Heart right ventricle (tissue), 16 donors: ENCODE measurements at regions of chr22 and their contacts with region 1.

Region 1: DNA sequence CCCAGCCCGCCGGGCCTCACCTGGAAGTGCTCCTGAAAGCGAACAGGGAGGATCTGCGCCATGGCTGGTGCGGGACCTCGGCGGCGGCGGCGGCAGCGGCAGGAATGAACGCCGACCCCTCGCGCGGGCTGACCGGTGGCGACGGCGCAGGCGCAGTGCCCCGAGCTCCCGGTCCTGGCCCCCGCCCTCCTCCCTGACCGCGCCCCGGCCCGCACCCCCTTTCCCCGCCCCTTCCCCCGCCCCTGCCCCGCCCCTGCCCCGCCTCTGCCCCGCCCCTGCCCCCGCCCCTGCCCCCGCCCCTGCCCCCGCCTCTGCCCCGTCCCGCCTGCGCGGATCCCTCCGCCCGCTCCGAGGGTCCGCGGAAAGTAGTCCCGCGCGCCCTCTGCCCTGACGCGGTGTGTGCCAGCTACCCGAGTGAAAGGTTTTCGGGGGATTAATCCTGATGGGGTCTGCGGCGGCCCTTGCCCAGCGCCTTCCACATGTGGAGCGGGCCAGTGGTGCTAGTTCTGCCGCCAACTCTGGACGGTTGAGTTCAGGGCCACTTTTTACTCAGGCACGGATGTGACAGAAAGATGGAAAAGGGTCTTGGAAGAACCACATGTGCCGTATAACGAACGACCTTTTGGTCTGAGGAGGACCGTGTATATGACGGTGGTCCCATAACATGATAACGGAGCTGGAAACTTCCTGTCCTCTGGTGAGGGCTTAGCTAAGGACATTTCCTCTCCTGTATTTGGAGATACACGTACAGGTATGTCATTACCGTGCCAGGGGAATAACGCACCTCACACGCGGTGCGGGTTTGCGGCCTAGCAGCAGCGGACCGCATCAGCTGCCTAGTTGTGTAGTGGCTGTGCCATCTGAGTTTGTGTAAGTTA is at the start of gene CLTCL1:
- DNase-seq: peak; percentile 84 to 89
- ATAC-seq: peak; percentile 81 to 95 (median 90)
- H3K4me3 ChIP-seq: peak within 1 kb of the TSS; percentile 72 to 99 (median 92)
- H3K27ac ChIP-seq: peak within 1 kb of the TSS; percentile 69 to 90 (median 81)
- H3K4me1 ChIP-seq: peaks cover 4 to 43% (median 24%) of the 10 kb centered on the region in 9 donors
- H3K27me3 ChIP-seq: no peaks in the 10 kb centered on the region
- CTCF ChIP-seq: no peak
- total RNA-seq, gene CLTCL1: 7.1 to 21.9 (median 13.6) TPM

Region 2: DNA sequence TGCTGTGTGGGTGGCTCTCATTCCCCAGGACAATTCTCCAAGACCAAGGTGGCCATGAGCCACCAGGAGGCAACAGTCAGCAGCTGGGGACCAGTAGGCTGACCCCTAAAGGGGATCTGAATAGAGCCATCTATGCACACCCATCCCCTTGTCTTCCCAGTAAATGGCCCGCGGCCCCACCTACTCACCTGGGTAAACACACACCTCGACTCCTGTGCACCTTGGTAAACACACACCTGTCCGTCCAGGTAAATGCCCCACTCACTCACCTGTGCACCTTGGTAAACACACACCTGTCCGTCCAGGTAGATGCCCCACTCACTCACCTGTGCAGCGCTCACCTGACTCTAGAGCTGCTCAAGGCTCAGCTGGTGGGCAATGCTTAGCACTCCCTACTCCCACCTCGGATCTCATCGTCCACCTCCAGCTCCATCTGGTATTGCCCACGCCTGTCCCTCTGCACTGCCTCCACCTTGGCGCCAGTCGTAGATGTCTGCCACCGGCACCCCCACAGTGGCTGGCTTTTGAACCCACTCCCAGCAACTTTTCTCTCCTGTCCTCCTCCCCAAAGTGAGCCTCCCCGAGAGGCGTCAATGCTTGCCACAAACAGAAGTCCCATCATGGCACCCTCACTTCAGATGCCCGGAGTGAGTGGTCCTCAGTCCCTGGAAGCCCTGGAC is 123.5 kb before region 1 on chr22:
- intact Hi-C with region 1: no loop called
- DNase-seq: no peak
- ATAC-seq: no peak
- H3K4me3 ChIP-seq: no peak overlapping the region
- H3K27ac ChIP-seq: no peak overlapping the region
- H3K4me1 ChIP-seq: peaks cover 15 to 40% (median 35%) of the 10 kb centered on the region in 9 donors
- H3K27me3 ChIP-seq: peaks cover 29 to 59% (median 47%) of the 10 kb centered on the region in 7 donors
- CTCF ChIP-seq: no peak

Region 3: GRCh38 chr22:19178656-19179496 is 112.9 kb before region 1 on chr22 and contains the start of gene SLC25A1:
- intact Hi-C with region 1: loop called in 2 of 10 experiments (anchors 5 kb)
- DNase-seq: peak; percentile 90 to 95
- ATAC-seq: peak; percentile 87 to 94 (median 90)
- H3K4me3 ChIP-seq: peak within 1 kb of the TSS; percentile 66 to 96 (median 89)
- H3K27ac ChIP-seq: peak within 1 kb of the TSS; percentile 77 to 93 (median 88)
- H3K4me1 ChIP-seq: peaks cover 16 to 51% (median 37%) of the 10 kb centered on the region in 9 donors
- H3K27me3 ChIP-seq: no peaks in the 10 kb centered on the region
- CTCF ChIP-seq: no peak
- total RNA-seq, gene SLC25A1: 14.8 to 29.1 (median 19.9) TPM

Region 4: GRCh38 chr22:19214078-19214473 is 77.7 kb before region 1 on chr22:
- intact Hi-C with region 1: loop called in 1 of 10 experiments (anchors 5 kb)
- DNase-seq: no peak
- ATAC-seq: no peak
- H3K4me3 ChIP-seq: no peak overlapping the region
- H3K27ac ChIP-seq: no peak overlapping the region
- H3K4me1 ChIP-seq: peaks cover 0 to 16% (median 16%) of the 10 kb centered on the region in 9 donors
- H3K27me3 ChIP-seq: no peaks in the 10 kb centered on the region
- CTCF ChIP-seq: no peak

Region 5: DNA sequence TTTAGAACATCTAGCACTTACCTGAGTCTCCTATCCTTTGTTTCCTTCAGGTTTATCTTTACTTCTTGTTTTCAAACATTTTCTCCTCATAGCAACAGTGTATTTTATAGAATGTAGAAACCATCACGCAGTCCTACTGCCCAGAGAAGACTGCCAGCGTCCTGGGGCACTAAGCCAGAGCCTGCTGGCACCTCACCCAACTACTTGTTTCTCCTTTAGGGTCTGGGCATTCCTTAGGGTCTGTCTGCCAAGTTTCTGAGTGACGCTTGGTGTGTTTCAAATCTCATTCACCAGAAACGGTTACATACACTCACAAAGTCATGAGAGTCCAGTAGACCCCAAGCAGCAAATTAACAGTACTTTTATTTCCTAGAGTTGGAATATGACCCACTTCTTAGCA is 63.6 kb before region 1 on chr22:
- intact Hi-C with region 1: loop called in 1 of 10 experiments (anchors 10 kb)
- DNase-seq: peak in 1 of 2 donors; percentile 35
- ATAC-seq: peak in 1 of 8 donors; percentile 73
- H3K4me3 ChIP-seq: no peak overlapping the region
- H3K27ac ChIP-seq: no peak overlapping the region
- H3K4me1 ChIP-seq: peaks cover 0 to 16% (median 4%) of the 10 kb centered on the region in 9 donors
- H3K27me3 ChIP-seq: no peaks in the 10 kb centered on the region
- CTCF ChIP-seq: no peak

Region 6: DNA sequence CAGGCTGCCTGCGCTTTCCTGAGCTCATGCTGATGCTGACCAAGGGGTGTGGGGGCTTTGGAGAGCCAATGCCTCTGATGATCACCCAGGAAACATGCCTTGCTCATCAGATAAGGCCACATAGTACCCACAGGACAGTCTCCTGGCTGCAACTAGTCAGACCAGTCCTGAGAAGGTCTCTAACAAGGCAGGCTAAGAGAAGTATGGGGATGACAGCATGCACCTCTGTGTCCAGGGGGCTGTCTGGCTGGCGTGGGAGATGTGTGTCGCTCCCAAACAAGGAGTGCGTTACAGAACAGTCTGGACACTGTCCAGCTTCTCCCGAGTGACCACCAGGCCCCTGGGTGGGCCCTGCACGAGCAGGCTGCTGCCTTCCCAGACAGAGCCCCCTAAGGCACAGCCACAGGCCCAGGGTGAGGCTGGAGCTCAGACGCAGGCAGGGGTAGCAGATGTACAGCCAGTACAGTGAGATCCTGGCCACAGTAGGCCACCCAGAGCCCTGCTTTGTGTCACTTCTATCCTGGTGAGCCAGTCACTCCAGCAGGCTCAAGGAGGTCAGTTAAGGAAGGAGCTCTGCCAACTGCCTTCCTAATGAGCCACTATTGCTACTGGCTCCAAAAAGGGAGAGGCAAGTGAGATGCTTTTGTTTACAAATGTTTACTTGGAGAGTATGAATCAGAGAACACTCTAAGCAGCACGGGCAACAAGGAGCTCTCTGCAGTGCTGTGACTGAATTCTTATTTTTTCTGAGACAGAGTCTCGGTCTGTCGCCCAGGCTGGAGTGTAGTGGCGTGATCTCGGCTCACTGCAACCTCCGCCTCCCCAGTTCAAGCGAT is 65.7 kb after region 1 on chr22:
- intact Hi-C with region 1: no loop called
- DNase-seq: no peak
- ATAC-seq: no peak
- H3K4me3 ChIP-seq: no peak overlapping the region
- H3K27ac ChIP-seq: no peak overlapping the region
- H3K4me1 ChIP-seq: no peaks in the 10 kb centered on the region
- H3K27me3 ChIP-seq: no peaks in the 10 kb centered on the region
- CTCF ChIP-seq: no peak

Region 7: GRCh38 chr22:19432133-19432851 is 140.5 kb after region 1 on chr22 and contains the start of gene MRPL40:
- intact Hi-C with region 1: loop called in 2 of 10 experiments (anchors 5 to 10 kb)
- DNase-seq: peak; percentile 95 to 96
- ATAC-seq: peak; percentile 96 to 98 (median 98)
- H3K4me3 ChIP-seq: peak within 1 kb of the TSS; percentile 65 to 94 (median 84)
- H3K27ac ChIP-seq: peak within 1 kb of the TSS; percentile 89 to 99 (median 98)
- H3K4me1 ChIP-seq: peaks cover 7 to 55% (median 34%) of the 10 kb centered on the region in 9 donors
- H3K27me3 ChIP-seq: no peaks in the 10 kb centered on the region
- CTCF ChIP-seq: peak in 3 of 9 donors; percentile 18 to 37 (median 29)
- total RNA-seq, gene MRPL40: 49.2 to 89.9 (median 54.9) TPM

Region 8: GRCh38 chr22:19447388-19448075 is 155.7 kb after region 1 on chr22 and contains the start of gene C22orf39:
- intact Hi-C with region 1: loop called in 2 of 10 experiments (anchors 5 to 10 kb)
- DNase-seq: peak; percentile 86 to 95
- ATAC-seq: peak; percentile 92 to 97 (median 96)
- H3K4me3 ChIP-seq: peak within 1 kb of the TSS; percentile 64 to 97 (median 91)
- H3K27ac ChIP-seq: peak within 1 kb of the TSS; percentile 87 to 97 (median 93)
- H3K4me1 ChIP-seq: peaks cover 20 to 52% (median 37%) of the 10 kb centered on the region in 9 donors
- H3K27me3 ChIP-seq: no peaks in the 10 kb centered on the region
- CTCF ChIP-seq: no peak
- total RNA-seq, gene C22orf39: 47.7 to 123 (median 66.2) TPM